AG04450 (cell line): ENCODE measurements at regions of chr1 and their contacts with region 1.

Region 1: DNA sequence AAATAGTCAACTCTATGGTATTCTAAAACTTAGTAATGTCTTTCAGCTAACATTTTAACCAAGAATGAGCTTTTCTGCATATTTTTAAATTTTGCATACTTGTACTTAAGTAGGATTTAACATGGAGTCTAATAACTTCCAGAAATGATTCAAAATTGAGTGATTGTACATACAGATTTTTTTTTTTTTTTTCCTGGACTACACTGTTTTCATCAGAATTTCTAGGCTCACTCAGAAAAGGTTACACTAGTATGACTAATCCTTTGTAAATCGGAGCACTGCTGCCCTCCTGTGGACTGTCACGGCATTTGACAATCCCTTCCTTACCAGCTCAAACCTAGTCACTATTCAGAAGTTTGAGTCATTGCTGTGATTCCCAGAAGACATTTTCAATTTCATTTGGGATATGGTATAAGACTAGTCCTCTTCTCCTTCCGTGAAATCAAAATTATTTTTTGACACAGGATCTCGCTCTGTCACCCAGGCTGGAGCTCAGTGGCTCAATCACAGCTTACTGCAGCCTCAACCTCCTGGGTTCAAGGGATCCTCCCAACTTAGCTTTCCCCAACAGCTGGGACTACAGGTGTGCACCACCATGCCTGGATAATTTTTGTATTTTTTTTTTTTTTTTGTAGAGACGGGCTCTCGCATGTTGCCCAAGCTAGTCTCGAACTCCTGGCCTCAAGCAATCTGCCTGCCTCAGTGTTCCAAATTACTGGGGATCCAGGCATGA is 45.5 kb downstream of the CD46 start:
- DNase-seq: peak; percentile 68
- H3K4me3 ChIP-seq: no peak overlapping the region
- H3K27ac ChIP-seq: no peak overlapping the region
- H3K27me3 ChIP-seq: no peaks in the 10 kb centered on the region
- CTCF ChIP-seq: peak; percentile 81

Region 2: GRCh38 chr1:207654320-207654719 is 143.1 kb before region 1 on chr1:
- CTCF ChIA-PET with region 1: interaction called, 15 read pairs
- POLR2A ChIA-PET with region 1: no interaction called
- DNase-seq: no peak
- H3K4me3 ChIP-seq: no peak overlapping the region
- H3K27ac ChIP-seq: no peak overlapping the region
- H3K27me3 ChIP-seq: peaks cover 1% of the 10 kb centered on the region
- CTCF ChIP-seq: peak; percentile 32

Region 3: GRCh38 chr1:207811920-207812720 is 14.7 kb after region 1 on chr1:
- CTCF ChIA-PET with region 1: interaction called, 27 read pairs
- POLR2A ChIA-PET with region 1: interaction called, 5 read pairs
- DNase-seq: no peak
- H3K4me3 ChIP-seq: no peak overlapping the region
- H3K27ac ChIP-seq: no peak overlapping the region
- H3K27me3 ChIP-seq: no peaks in the 10 kb centered on the region
- CTCF ChIP-seq: peak; percentile 45

Region 4: DNA sequence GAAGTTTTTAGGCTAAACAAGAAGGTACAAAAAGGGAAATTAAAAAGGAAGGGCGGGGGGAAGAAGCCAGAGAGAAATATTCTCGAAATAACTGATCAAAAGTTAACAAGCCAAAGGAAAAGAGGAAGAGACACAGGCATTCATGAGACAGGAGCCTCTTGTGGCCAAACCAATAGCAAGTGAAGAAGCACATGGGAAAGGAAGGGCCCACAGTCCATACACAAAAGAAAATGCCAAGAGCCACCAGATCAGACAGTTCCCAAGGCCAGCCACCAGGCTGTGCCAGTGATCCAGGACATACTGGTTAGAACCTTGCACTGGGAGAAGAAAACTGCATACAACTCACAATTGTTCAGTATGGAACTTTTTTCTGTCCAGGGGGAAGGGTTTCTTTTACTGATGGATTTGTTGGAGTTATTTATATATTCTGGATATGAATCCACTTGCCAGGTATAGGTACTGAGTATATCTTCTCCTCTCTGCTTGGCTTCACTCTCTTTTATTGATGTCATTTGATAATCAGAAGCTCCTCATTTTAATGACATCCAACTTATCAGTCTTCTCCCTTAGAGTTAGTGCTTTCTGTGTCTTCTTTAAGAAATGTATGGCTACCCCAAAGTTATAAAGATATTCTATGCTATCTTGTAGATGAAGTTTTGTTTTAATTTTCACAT is 31.2 kb after region 1 on chr1:
- CTCF ChIA-PET with region 1: interaction called, 23 read pairs
- POLR2A ChIA-PET with region 1: interaction called, 5 read pairs
- DNase-seq: peak; percentile 64
- H3K4me3 ChIP-seq: no peak overlapping the region
- H3K27ac ChIP-seq: no peak overlapping the region
- H3K27me3 ChIP-seq: no peaks in the 10 kb centered on the region
- CTCF ChIP-seq: peak; percentile 84

Region 5: DNA sequence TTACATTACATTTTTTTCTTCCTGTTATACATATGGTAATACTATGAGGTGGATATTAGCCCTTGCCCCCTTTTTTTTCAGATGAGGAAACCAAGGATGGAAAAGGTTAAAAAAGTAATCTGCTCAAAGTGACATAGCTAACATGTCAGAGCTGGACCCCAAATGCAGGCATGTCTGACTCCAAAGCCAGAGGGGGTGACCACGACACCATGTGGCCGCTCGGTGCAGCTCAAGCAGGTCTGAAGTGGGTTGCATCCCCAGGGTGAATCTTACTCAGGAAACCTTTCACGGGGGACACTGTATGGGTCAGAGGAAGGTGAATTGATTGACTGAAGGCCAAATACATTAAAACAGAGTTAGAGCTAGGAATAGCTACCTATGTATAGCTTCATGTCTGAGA is 78.7 kb after region 1 on chr1:
- CTCF ChIA-PET with region 1: interaction called, 15 read pairs
- POLR2A ChIA-PET with region 1: no interaction called
- DNase-seq: no peak
- H3K4me3 ChIP-seq: no peak overlapping the region
- H3K27ac ChIP-seq: no peak overlapping the region
- H3K27me3 ChIP-seq: peaks cover 8% of the 10 kb centered on the region
- CTCF ChIP-seq: peak; percentile 32